Mammary epithelial cell (primary cell): ENCODE measurements at regions of chr7 and their contacts with region 1.

Region 1: DNA sequence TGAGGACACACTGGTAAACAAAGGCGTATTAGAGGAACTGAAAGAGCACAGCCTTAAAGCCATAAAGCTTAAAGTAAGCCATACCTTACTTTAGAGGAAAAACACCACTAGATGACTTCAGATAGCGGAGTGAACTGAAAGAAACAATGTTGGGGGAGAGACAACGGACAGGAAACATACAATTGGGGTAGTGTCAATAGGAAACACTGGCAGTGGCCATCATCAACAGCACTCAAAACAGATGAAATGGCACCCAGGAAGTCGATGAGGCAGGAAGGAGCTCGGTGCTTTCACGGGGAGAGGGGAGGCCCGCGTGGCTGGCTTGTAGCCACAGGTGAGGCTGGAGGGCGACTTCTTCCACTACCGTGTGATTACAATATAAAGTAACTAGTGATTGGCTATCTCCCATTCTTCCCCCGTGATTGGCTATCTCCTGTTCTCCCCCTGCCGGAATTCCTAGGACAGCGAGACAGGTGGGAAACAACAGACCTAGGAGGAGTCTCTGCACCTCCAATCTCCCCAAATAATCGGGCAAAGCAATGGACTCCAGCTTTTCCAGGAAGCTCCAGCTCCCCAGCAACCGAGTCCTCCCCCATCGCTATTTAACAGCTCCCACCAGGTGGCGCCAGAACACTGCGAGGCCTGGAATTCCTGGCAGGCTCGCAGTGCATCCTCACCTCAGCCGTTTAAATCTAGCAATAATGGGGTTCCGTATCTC is 2.4 kb upstream of the TAS2R38 start:
- DNase-seq: peak; percentile 78
- H3K4me3 ChIP-seq: peak overlapping the region in 2 of 3 experiments; percentile 8 to 29
- H3K27ac ChIP-seq: peak overlapping the region; percentile 13
- H3K4me1 ChIP-seq: peaks cover 13% of the 10 kb centered on the region
- H3K27me3 ChIP-seq: no peaks in the 10 kb centered on the region
- CTCF ChIP-seq: peak; percentile 82 to 96

Region 2: DNA sequence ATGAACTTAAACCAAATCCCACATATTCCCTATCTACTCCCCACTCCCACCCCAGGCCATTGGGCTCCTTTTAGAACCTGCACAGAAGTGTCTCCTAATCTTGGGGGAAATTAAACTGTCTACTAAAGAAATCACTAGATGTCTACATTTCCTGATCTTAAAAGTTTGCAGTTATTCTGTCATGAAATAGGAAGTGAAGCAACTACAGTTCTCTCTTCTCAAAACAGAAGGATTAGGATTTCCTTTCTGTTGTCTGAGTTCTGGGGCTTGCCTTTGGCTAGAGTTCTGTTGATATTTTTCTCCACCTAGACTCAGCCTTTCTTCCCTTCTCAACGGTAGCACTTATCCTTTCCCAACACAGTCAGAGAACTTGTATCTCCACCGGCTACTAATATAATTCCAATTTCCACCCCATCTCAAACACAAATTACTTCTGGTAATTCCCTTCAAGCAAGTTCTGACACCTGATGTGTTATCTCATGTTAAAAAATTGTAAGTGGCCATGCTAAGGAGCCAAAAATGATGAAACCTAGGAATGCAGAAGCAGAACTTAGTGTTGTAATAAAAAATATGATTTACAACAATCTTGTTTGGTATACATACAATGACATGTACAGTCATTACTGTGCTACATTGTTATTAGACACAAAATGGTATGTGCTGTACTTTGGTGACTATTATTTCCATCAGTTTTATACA is 47.7 kb before region 1 on chr7:
- CTCF ChIA-PET with region 1: no interaction called
- dilution Hi-C with region 1: no loop called
- in situ Hi-C with region 1: no loop called
- intact Hi-C with region 1: no loop called
- DNase-seq: no peak
- H3K4me3 ChIP-seq: no peak overlapping the region
- H3K27ac ChIP-seq: no peak overlapping the region
- H3K4me1 ChIP-seq: no peaks in the 10 kb centered on the region
- H3K27me3 ChIP-seq: no peaks in the 10 kb centered on the region
- CTCF ChIP-seq: no peak

Region 3: GRCh38 chr7:142001163-142001874 is 25.4 kb after region 1 on chr7:
- CTCF ChIA-PET with region 1: no interaction called
- dilution Hi-C with region 1: no loop called
- in situ Hi-C with region 1: no loop called
- intact Hi-C with region 1: loop called (anchors 1 kb)
- DNase-seq: peak; percentile 75
- H3K4me3 ChIP-seq: no peak overlapping the region
- H3K27ac ChIP-seq: peak overlapping the region; percentile 81
- H3K4me1 ChIP-seq: peaks cover 28% of the 10 kb centered on the region
- H3K27me3 ChIP-seq: no peaks in the 10 kb centered on the region
- CTCF ChIP-seq: no peak

Region 4: GRCh38 chr7:142024547-142024946 is 48.6 kb after region 1 on chr7:
- CTCF ChIA-PET with region 1: interaction called, 15 read pairs
- dilution Hi-C with region 1: no loop called
- in situ Hi-C with region 1: no loop called
- intact Hi-C with region 1: loop called (anchors 1 kb)
- DNase-seq: peak; percentile 92
- H3K4me3 ChIP-seq: no peak overlapping the region
- H3K27ac ChIP-seq: peak overlapping the region; percentile 92
- H3K4me1 ChIP-seq: peaks cover 44% of the 10 kb centered on the region
- H3K27me3 ChIP-seq: no peaks in the 10 kb centered on the region
- CTCF ChIP-seq: peak; percentile 17 to 46

Region 5: GRCh38 chr7:142153400-142153799 is 177.4 kb after region 1 on chr7:
- CTCF ChIA-PET with region 1: no interaction called
- dilution Hi-C with region 1: no loop called
- in situ Hi-C with region 1: no loop called
- intact Hi-C with region 1: loop called (anchors 2 kb)
- DNase-seq: peak; percentile 22
- H3K4me3 ChIP-seq: no peak overlapping the region
- H3K27ac ChIP-seq: no peak overlapping the region
- H3K4me1 ChIP-seq: no peaks in the 10 kb centered on the region
- H3K27me3 ChIP-seq: no peaks in the 10 kb centered on the region
- CTCF ChIP-seq: peak; percentile 43 to 73

Region 6: DNA sequence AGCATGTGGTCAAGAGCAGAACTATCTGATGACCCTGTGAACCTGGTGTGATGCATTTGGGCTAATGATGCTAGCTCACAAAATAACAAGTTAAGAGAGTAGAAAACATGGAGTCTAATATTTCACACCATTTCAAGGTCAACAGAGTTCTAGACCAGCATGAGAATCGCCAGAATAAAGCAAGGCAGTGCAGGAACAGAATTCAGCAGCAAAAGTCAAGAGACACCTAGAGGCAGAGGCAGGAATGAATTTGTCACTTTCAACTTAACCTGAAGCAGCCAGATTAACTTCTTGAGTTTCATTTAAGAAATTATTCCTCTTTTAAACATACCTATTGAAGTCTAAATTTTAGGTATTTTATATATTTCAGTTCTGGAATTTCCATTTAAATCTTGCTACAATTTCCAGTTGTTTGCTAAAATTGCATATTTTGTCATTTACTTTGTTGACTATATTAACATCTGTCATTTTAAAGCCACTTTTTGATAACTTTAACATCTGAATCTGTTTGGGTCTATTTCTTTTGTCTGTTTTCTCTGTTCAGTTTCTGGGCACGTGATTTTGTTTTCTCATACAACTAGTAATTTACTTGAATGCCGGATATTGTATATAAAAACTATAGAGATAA is 326.1 kb after region 1 on chr7:
- CTCF ChIA-PET with region 1: no interaction called
- dilution Hi-C with region 1: no loop called
- in situ Hi-C with region 1: no loop called
- intact Hi-C with region 1: loop called (anchors 1 kb)
- DNase-seq: no peak
- H3K4me3 ChIP-seq: no peak overlapping the region
- H3K27ac ChIP-seq: no peak overlapping the region
- H3K4me1 ChIP-seq: no peaks in the 10 kb centered on the region
- H3K27me3 ChIP-seq: peaks cover 3% of the 10 kb centered on the region
- CTCF ChIP-seq: peak; percentile 57 to 71